ENCODE measurements at regions of chr21 and their contacts with region 1.

Region 1: GRCh38 chr21:34351786-34352241 is 12.0 kb upstream of the KCNE2 start:
- DNase-seq: peak in 3 of 9 experiments; percentile 9 to 56 (median 41)
- ATAC-seq: peak; percentile 63
- H3K4me3 ChIP-seq: no peak overlapping the region
- H3K4me3 Mint-ChIP-seq: no peak overlapping the region
- H3K27ac ChIP-seq: no peak overlapping the region
- H3K27ac Mint-ChIP-seq: no peak overlapping the region
- H3K4me1 ChIP-seq: no peaks in the 10 kb centered on the region
- H3K4me1 Mint-ChIP-seq: peaks cover 10% of the 10 kb centered on the region
- H3K27me3 ChIP-seq: no peaks in the 10 kb centered on the region
- H3K27me3 Mint-ChIP-seq: peaks cover 18% of the 10 kb centered on the region
- CTCF ChIP-seq: no peak

Region 2: GRCh38 chr21:33915368-33916199 is 436.2 kb before region 1 on chr21 and contains the start of gene ATP5PO:
- CTCF ChIA-PET with region 1: interaction called, 13 read pairs
- POLR2A ChIA-PET with region 1: no interaction called
- intact Hi-C with region 1: no loop called
- DNase-seq: peak; percentile 91 to 98 (median 96)
- ATAC-seq: peak; percentile 99
- H3K4me3 ChIP-seq: peak within 1 kb of the TSS; percentile 78 to 94
- H3K4me3 Mint-ChIP-seq: peak within 1 kb of the TSS; percentile 97
- H3K27ac ChIP-seq: peak within 1 kb of the TSS; percentile 74 to 82
- H3K27ac Mint-ChIP-seq: peak within 1 kb of the TSS; percentile 94
- H3K4me1 ChIP-seq: peaks cover 18% of the 10 kb centered on the region
- H3K4me1 Mint-ChIP-seq: peaks cover 30% of the 10 kb centered on the region
- H3K27me3 ChIP-seq: no peaks in the 10 kb centered on the region
- H3K27me3 Mint-ChIP-seq: no peaks in the 10 kb centered on the region
- CTCF ChIP-seq: no peak
- total RNA-seq, gene ATP5PO: 129 to 143 TPM

Region 3: DNA sequence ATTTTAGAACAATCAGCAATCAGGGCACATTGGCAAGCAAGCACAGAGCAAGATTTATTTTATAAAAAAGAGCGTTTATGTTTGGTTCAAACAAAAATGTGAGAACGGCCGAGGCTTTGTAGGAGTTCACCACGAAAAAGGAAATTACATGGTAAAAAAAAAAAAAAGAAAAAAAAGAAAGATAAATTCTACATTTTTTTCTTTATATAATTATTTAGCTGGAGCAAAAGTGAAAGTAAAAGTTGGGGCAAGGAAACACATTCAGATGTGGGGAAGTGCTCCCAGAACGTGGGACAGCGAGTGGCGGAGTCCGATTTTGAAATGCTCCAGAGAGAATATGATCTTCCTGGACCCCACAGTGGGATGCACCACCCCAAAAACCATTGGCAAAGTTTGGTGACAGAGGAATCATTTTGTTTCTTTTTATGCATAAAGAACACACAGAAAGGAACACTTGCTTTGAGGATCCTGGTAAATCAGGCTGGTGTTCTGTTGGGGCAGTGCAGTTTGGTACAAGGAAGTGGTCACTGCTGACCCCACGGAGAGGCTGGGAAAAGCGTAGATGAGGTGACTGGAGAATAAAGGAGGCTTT is 419.9 kb before region 1 on chr21:
- CTCF ChIA-PET with region 1: interaction called, 17 read pairs
- POLR2A ChIA-PET with region 1: interaction called, 3 read pairs
- intact Hi-C with region 1: no loop called
- DNase-seq: peak in 2 of 9 experiments; percentile 27 to 34
- ATAC-seq: peak; percentile 26
- H3K4me3 ChIP-seq: peak overlapping the region; percentile 70 to 85
- H3K4me3 Mint-ChIP-seq: peak overlapping the region; percentile 94
- H3K27ac ChIP-seq: peak overlapping the region; percentile 85 to 90
- H3K27ac Mint-ChIP-seq: peak overlapping the region; percentile 99
- H3K4me1 ChIP-seq: peaks cover 42% of the 10 kb centered on the region
- H3K4me1 Mint-ChIP-seq: peaks cover 46% of the 10 kb centered on the region
- H3K27me3 ChIP-seq: no peaks in the 10 kb centered on the region
- H3K27me3 Mint-ChIP-seq: no peaks in the 10 kb centered on the region
- CTCF ChIP-seq: no peak

Region 4: GRCh38 chr21:34336756-34337391 is 14.9 kb before region 1 on chr21:
- CTCF ChIA-PET with region 1: interaction called, 19 read pairs
- POLR2A ChIA-PET with region 1: no interaction called
- intact Hi-C with region 1: no loop called
- DNase-seq: no peak
- ATAC-seq: no peak
- H3K4me3 ChIP-seq: no peak overlapping the region
- H3K4me3 Mint-ChIP-seq: no peak overlapping the region
- H3K27ac ChIP-seq: no peak overlapping the region
- H3K27ac Mint-ChIP-seq: no peak overlapping the region
- H3K4me1 ChIP-seq: no peaks in the 10 kb centered on the region
- H3K4me1 Mint-ChIP-seq: no peaks in the 10 kb centered on the region
- H3K27me3 ChIP-seq: peaks cover 0 to 3% of the 10 kb centered on the region in 2 experiments
- H3K27me3 Mint-ChIP-seq: no peaks in the 10 kb centered on the region
- CTCF ChIP-seq: no peak

Region 5: DNA sequence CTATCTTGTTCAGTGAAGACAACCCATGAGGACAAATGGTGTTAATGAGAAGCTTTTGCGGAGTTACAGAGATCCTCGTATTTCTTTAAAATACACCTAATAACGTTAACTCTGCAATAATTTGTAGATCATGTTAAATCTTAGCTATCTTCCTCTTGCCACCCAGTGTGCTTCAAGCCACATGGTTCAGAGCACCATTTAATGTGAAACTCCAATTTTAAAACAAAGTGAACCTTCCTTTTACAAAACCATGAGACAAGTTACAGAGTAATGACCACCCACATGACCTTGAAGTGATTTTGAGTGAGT is 10.3 kb after region 1 on chr21:
- CTCF ChIA-PET with region 1: interaction called, 11 read pairs
- POLR2A ChIA-PET with region 1: no interaction called
- intact Hi-C with region 1: no loop called
- DNase-seq: no peak
- ATAC-seq: peak; percentile 9
- H3K4me3 ChIP-seq: no peak overlapping the region
- H3K4me3 Mint-ChIP-seq: no peak overlapping the region
- H3K27ac ChIP-seq: no peak overlapping the region
- H3K27ac Mint-ChIP-seq: no peak overlapping the region
- H3K4me1 ChIP-seq: no peaks in the 10 kb centered on the region
- H3K4me1 Mint-ChIP-seq: peaks cover 6% of the 10 kb centered on the region
- H3K27me3 ChIP-seq: peaks cover 0 to 3% of the 10 kb centered on the region in 2 experiments
- H3K27me3 Mint-ChIP-seq: peaks cover 4% of the 10 kb centered on the region
- CTCF ChIP-seq: peak; percentile 46

Region 6: DNA sequence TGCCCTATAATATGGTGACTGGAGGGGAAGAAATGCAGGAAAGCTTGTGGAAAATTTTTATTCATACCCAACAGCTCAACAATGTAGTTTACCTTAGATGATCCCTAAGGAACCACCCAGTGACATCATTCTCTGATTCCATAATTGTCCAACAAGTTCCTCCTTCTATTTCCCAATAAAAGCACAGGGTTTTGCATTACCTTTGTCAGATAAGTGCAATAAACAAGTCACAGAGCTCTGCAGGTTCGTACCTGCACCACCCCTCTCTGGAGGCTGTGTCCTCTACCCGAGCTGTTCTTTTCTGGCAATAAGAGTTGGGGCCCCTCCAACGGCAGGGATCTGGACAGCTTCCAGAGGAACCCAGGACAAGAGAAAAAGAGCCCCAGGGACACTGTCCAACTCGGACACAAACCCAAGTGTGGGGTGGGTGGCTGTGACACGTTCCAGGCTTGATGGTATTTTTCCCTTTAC is 224.3 kb after region 1 on chr21:
- CTCF ChIA-PET with region 1: no interaction called
- POLR2A ChIA-PET with region 1: no interaction called
- intact Hi-C with region 1: no loop called
- DNase-seq: no peak
- ATAC-seq: no peak
- H3K4me3 ChIP-seq: no peak overlapping the region
- H3K4me3 Mint-ChIP-seq: no peak overlapping the region
- H3K27ac ChIP-seq: no peak overlapping the region
- H3K27ac Mint-ChIP-seq: no peak overlapping the region
- H3K4me1 ChIP-seq: no peaks in the 10 kb centered on the region
- H3K4me1 Mint-ChIP-seq: peaks cover 6% of the 10 kb centered on the region
- H3K27me3 ChIP-seq: no peaks in the 10 kb centered on the region
- H3K27me3 Mint-ChIP-seq: no peaks in the 10 kb centered on the region
- CTCF ChIP-seq: no peak